ENCODE measurements at regions of chr1 and their contacts with region 1.

Region 1: GRCh38 chr1:38037221-38037939 is 9.2 kb downstream of the POU3F1 start:
- DNase-seq: peak in 2 of 3 donors; percentile 26 to 31
- H3K4me3 ChIP-seq: no peak overlapping the region
- H3K27ac ChIP-seq: no peak overlapping the region
- H3K4me1 ChIP-seq: no peaks in the 10 kb centered on the region
- H3K27me3 ChIP-seq: peaks cover 2 to 31% (median 21%) of the 10 kb centered on the region in 5 experiments

Region 2: GRCh38 chr1:38018864-38019343 is 18.5 kb before region 1 on chr1:
- CTCF ChIA-PET with region 1: interaction called, 18 read pairs
- POLR2A ChIA-PET with region 1: no interaction called
- DNase-seq: peak in 2 of 3 donors; percentile 71 to 75
- H3K4me3 ChIP-seq: no peak overlapping the region
- H3K27ac ChIP-seq: no peak overlapping the region
- H3K4me1 ChIP-seq: peaks cover 0 to 20% (median 9%) of the 10 kb centered on the region in 4 experiments
- H3K27me3 ChIP-seq: no peaks in the 10 kb centered on the region

Region 3: DNA sequence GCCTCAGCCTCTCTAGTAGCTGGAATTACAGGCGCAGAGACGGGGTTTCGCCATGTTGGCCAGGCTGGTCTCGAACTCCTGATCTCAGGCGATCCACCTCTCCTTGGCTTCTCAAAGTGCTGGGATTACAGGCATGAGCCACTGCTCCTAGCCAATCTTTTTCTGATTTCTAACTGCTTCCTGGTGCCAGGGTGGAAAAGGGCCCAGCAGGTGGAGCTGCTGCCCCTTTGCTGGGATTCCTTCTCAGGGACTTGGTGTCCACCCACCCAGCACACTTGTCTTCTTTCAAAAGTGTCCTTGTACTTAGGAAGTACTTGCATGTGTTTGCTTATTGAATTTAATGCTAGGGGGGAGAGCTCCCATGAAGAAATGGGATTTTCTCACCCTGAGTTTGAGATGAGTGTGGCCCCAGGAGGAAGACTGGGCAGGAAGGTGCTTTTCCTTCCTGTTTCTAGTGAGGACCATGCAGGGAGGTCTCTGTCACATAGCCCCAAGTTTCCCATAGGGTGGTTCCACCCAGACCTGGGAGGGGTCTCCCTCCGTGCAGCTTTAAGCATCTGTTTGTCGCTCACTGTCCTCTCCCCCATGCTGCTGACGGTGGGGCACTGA is 10.7 kb before region 1 on chr1:
- CTCF ChIA-PET with region 1: interaction called, 18 read pairs
- POLR2A ChIA-PET with region 1: no interaction called
- DNase-seq: peak; percentile 36 to 61 (median 59)
- H3K4me3 ChIP-seq: no peak overlapping the region
- H3K27ac ChIP-seq: no peak overlapping the region
- H3K4me1 ChIP-seq: peaks cover 3 to 65% (median 33%) of the 10 kb centered on the region in 4 experiments
- H3K27me3 ChIP-seq: peaks cover 0 to 7% (median 0%) of the 10 kb centered on the region in 5 experiments

Region 4: DNA sequence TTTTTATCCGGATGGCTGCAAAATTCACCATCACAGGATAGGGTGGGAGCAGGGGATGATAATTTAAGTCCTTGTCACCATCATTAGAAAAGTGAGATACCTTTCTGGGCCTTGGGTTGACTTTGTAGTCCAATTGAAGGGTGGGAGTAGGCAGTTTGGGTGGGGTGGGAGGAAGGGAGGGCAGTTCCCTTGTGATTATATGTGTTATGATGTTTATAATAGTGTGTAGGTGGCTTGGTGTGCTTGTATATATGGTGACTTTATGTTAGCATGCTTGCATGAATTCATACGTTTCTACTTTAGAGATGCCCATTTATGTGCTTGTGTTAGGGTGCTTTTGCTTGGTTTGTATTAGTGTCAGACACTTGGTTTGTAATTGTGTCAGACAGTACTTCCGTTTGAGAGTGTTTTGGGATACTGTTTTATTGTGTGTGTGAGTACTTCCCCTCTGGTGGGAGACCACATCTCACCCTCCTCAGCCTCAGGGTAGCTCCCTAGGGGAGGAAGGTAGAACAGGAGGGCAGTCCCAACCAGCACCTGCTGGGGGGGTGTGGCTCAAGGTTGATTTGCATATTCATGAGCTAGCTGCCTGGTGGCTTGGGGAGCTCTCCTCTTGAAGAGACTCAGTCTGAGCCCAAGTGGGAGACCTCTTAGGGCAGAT is 15.5 kb after region 1 on chr1:
- CTCF ChIA-PET with region 1: no interaction called
- POLR2A ChIA-PET with region 1: no interaction called
- DNase-seq: peak in 1 of 3 donors; percentile 35
- H3K4me3 ChIP-seq: no peak overlapping the region
- H3K27ac ChIP-seq: no peak overlapping the region
- H3K4me1 ChIP-seq: peaks cover 0 to 8% (median 3%) of the 10 kb centered on the region in 4 experiments
- H3K27me3 ChIP-seq: peaks cover 3 to 48% (median 13%) of the 10 kb centered on the region in 5 experiments

Region 5: GRCh38 chr1:38191461-38191860 is 154.1 kb after region 1 on chr1:
- CTCF ChIA-PET with region 1: no interaction called
- POLR2A ChIA-PET with region 1: no interaction called
- DNase-seq: peak in 1 of 3 donors; percentile 20
- H3K4me3 ChIP-seq: peak overlapping the region in 1 of 7 experiments; percentile 9
- H3K27ac ChIP-seq: no peak overlapping the region
- H3K4me1 ChIP-seq: peaks cover 0 to 16% (median 13%) of the 10 kb centered on the region in 4 experiments
- H3K27me3 ChIP-seq: peaks cover 0 to 10% (median 0%) of the 10 kb centered on the region in 5 experiments

Measured in common myeloid progenitor, CD34-positive (primary cell).